ENCODE measurements at regions of chr16 and their contacts with region 1.

Region 1: GRCh38 chr16:27455700-27456099 is 53.7 kb downstream of the IL21R start:
- H3K4me3 Mint-ChIP-seq: no peak overlapping the region
- H3K27ac Mint-ChIP-seq: no peak overlapping the region
- H3K4me1 Mint-ChIP-seq: peaks cover 35% of the 10 kb centered on the region
- H3K27me3 Mint-ChIP-seq: peaks cover 27% of the 10 kb centered on the region

Region 2: GRCh38 chr16:27367461-27368357 is 88.0 kb before region 1 on chr16:
- intact Hi-C with region 1: loop called (anchors 2 kb)
- H3K4me3 Mint-ChIP-seq: peak overlapping the region; percentile 62
- H3K27ac Mint-ChIP-seq: peak overlapping the region; percentile 82
- H3K4me1 Mint-ChIP-seq: peaks cover 53% of the 10 kb centered on the region
- H3K27me3 Mint-ChIP-seq: no peaks in the 10 kb centered on the region

Measured in dendritic cell treated with granulocyte-macrophage colony-stimulating factor and Interleukin-4, amounts not matched to agents 40 ng/mL and 50 ng/mL, for 4 days (primary cell).